ENCODE measurements at regions of chr11 and their contacts with region 1.

Region 1: GRCh38 chr11:57638005-57638781 is 11.5 kb downstream of the YPEL4 start:
- DNase-seq: peak in 1 of 2 donors; percentile 80
- H3K4me3 ChIP-seq: peak overlapping the region; percentile 85 to 91 (median 90)
- H3K27ac ChIP-seq: peak overlapping the region; percentile 92 to 95
- H3K4me1 ChIP-seq: peaks cover 0 to 6% of the 10 kb centered on the region in 2 donors
- H3K27me3 ChIP-seq: no peaks in the 10 kb centered on the region
- CTCF ChIP-seq: no peak
- POLR2A ChIP-seq: no peak

Region 2: DNA sequence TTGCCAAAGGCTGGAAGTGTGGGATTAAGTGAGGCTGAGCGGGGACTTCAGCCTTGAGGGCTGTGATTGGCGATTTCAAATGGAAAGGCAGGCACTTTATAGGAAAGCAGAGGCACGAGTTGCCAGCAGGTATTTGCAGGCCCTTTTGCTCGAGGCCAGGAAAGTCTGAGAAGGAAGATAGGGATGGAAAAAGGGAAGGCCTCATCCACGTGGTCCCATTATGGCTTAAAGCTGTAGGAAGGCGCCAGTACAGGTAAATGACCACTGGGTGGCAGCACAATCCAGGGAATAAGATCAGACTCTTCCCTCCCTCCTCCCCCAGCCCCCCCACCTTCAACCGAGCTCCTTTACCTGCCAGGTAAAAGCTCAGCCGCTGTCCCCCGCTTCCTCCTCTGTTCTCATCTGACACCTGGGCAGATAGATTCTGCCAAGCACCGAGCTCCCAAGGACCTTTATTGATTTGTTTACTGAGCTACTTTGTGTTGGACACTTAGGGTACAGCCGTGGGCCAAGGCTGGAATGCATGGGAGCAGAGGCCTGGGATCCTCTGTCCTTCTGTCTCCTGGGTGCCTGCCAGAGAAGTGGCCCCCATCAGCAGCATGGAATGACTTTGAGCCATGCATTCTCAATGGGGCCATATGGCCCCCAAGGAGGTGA is 292.5 kb before region 1 on chr11:
- intact Hi-C with region 1: no loop called
- DNase-seq: peak; percentile 64 to 66
- H3K4me3 ChIP-seq: no peak overlapping the region
- H3K27ac ChIP-seq: no peak overlapping the region
- H3K4me1 ChIP-seq: no peaks in the 10 kb centered on the region
- H3K27me3 ChIP-seq: no peaks in the 10 kb centered on the region
- CTCF ChIP-seq: peak; percentile 44 to 67 (median 45)
- POLR2A ChIP-seq: no peak

Region 3: GRCh38 chr11:57567515-57568329 is 70.5 kb before region 1 on chr11 and contains the start of gene UBE2L6:
- intact Hi-C with region 1: loop called (anchors 5 kb)
- DNase-seq: peak; percentile 60 to 75
- H3K4me3 ChIP-seq: peak within 1 kb of the TSS; percentile 78 to 95 (median 85)
- H3K27ac ChIP-seq: peak within 1 kb of the TSS; percentile 82 to 89
- H3K4me1 ChIP-seq: peaks cover 0 to 7% of the 10 kb centered on the region in 2 donors
- H3K27me3 ChIP-seq: no peaks in the 10 kb centered on the region
- CTCF ChIP-seq: peak in 1 of 3 donors; percentile 87
- POLR2A ChIP-seq: no peak
- total RNA-seq, gene UBE2L6: 25.9 to 66.2 (median 48.1) TPM